Left ventricle myocardium inferior (tissue), 1 donor: ENCODE measurements at regions of chr2 and their contacts with region 1.

Region 1: DNA sequence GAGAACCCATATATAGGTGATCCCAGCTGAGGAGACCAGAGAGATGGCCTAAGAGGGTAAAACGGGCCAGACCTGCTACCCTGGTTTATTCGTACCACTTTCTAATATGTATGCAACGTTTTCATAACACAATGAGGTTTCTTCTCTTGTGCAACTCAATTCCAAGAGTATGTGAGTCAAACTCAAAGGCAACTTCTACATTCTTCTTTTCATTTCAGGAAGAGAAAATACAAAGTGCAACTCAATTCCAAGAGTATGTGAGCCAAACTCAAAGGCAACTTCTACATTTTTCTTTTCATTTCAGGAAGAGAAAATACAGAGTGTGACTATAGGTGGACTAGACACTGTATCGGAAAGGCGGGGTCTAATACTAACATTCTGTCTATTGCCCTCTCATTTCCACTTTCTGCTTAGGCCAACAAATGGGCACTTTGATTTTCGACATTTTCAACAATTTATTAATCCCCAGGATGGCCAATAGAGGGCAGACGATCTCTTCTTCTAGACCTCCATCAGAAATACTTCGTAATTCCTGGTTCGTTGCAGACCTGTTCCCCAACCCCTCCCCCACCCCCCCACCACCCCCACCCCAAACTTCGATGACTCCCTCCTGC is 3.7 kb upstream of the CRIM1 start:
- DNase-seq: no peak
- H3K4me3 ChIP-seq: no peak overlapping the region
- H3K27ac ChIP-seq: no peak overlapping the region
- H3K4me1 ChIP-seq: peaks cover 32% of the 10 kb centered on the region
- H3K27me3 ChIP-seq: no peaks in the 10 kb centered on the region
- CTCF ChIP-seq: peak; percentile 71

Region 2: GRCh38 chr2:36507408-36507812 is 155.6 kb after region 1 on chr2:
- intact Hi-C with region 1: loop called (anchors 5 kb)
- DNase-seq: no peak
- H3K4me3 ChIP-seq: no peak overlapping the region
- H3K27ac ChIP-seq: no peak overlapping the region
- H3K4me1 ChIP-seq: no peaks in the 10 kb centered on the region
- H3K27me3 ChIP-seq: no peaks in the 10 kb centered on the region
- CTCF ChIP-seq: peak; percentile 88

Region 3: DNA sequence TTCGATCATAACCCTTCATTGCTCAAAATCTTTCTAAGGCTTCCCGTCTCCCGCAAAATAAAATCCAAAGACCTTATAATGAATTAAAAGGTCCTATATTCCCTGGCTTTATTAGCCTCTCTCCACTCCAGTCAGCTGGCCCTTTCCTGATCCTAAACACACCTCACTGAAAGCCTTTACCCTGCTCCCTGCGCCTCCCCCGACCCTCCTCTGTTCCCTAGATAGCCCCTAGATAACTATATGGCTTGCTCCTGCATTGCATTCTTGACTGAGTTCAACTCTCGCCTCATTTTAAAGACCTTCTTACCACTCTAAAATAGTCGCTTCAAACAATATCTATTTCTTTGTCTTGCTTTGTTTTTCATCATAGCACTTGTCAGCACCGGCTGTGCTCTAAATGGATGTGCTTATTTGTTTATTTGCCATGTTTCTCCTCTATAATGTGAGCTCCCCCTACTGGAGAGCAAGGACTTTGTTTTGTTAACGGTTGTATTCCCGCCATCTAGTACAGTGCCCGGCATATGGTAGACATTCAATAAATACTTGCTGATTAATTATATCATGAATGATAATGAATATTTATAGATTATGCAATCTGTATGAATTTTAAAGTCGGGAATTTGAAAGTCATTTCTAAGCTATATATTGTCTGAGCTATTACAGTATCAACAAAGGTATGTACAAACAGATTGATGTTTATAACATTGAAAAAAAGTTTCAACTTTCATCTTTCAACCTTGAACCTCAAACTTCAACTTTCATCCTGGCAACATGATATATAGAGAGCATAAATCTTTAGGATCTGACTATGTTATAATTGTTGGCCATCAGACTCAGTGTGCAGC is 312.2 kb after region 1 on chr2:
- intact Hi-C with region 1: loop called (anchors 5 kb)
- DNase-seq: no peak
- H3K4me3 ChIP-seq: no peak overlapping the region
- H3K27ac ChIP-seq: no peak overlapping the region
- H3K4me1 ChIP-seq: peaks cover 4% of the 10 kb centered on the region
- H3K27me3 ChIP-seq: peaks cover 24% of the 10 kb centered on the region
- CTCF ChIP-seq: peak; percentile 82